ENCODE measurements at regions of chr1 and their contacts with region 1.

Region 1: GRCh38 chr1:155250633-155251449 is 4.4 kb downstream of the ENTREP3 start:
- DNase-seq: peak; percentile 85
- ATAC-seq: peak; percentile 78
- H3K4me3 ChIP-seq: no peak overlapping the region
- H3K27ac ChIP-seq: peak overlapping the region; percentile 12; the same call in 1 of the 2 replicates
- H3K4me1 ChIP-seq: peaks cover 15% of the 10 kb centered on the region
- H3K27me3 ChIP-seq: no peaks in the 10 kb centered on the region
- CTCF ChIP-seq: peak; percentile 100
- POLR2A ChIP-seq: peak; percentile 34; the same call in 1 of the 2 replicates
- RAD21 ChIP-seq: peak; percentile 93

Region 2: GRCh38 chr1:155591770-155592169 is 340.9 kb after region 1 on chr1:
- CTCF ChIA-PET with region 1: no interaction called
- POLR2A ChIA-PET with region 1: no interaction called
- dilution Hi-C with region 1: no loop called
- in situ Hi-C with region 1: no loop called
- intact Hi-C with region 1: loop called (anchors 5 kb)
- DNase-seq: peak; percentile 68
- ATAC-seq: peak; percentile 76
- H3K4me3 ChIP-seq: no peak overlapping the region
- H3K27ac ChIP-seq: no peak overlapping the region
- H3K4me1 ChIP-seq: no peaks in the 10 kb centered on the region
- H3K27me3 ChIP-seq: no peaks in the 10 kb centered on the region
- CTCF ChIP-seq: peak; percentile 60
- POLR2A ChIP-seq: no peak
- RAD21 ChIP-seq: peak; percentile 69

Region 3: DNA sequence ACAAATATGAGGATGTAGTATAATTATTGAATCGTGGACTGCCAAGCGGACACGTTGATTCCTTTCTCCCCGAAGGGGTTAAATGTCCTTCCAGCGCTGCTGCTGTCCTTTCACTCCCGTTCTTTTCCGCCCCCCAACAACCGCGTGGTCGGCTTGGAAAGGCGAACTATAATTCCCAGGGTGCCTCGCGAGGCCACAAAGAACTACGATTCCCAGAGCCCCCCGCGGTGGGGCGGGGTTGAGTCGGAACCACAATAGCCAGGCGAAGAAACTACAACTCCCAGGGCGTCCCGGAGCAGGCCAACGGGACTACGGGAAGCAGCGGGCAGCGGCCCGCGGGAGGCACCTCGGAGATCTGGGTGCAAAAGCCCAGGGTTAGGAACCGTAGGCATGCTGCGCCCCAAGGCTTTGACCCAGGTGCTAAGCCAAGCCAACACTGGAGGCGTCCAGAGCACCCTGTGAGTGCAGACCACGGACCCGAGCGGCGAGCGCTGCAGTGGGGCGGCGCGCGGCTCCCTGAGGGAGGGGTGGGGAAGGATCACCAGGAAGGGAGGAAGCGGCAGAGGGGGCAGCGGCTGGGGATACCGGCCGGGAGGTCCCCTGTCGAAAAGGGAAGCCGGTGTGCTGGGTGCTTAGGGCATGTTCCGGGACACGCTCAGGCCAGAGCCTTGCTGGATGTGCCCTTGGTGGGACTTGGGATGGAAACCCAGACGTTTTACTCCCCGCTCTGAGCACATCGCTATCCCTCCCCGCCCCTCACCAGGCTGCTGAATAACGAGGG is 803.8 kb after region 1 on chr1 and contains the start of gene LAMTOR2:
- CTCF ChIA-PET with region 1: no interaction called
- POLR2A ChIA-PET with region 1: no interaction called
- dilution Hi-C with region 1: no loop called
- in situ Hi-C with region 1: no loop called
- intact Hi-C with region 1: no loop called
- DNase-seq: peak; percentile 94
- ATAC-seq: peak; percentile 81
- H3K4me3 ChIP-seq: peak within 1 kb of the TSS; percentile 83
- H3K27ac ChIP-seq: peak within 1 kb of the TSS; percentile 90
- H3K4me1 ChIP-seq: peaks cover 4% of the 10 kb centered on the region; the same call in 1 of the 2 replicates
- H3K27me3 ChIP-seq: no peaks in the 10 kb centered on the region
- CTCF ChIP-seq: no peak
- POLR2A ChIP-seq: peak; percentile 49
- RAD21 ChIP-seq: no peak
- total RNA-seq, gene LAMTOR2: 45.8 and 50.0 TPM in 2 replicates